Caco-2 (cell line): ENCODE measurements at regions of chr17 and their contacts with region 1.

Region 1: DNA sequence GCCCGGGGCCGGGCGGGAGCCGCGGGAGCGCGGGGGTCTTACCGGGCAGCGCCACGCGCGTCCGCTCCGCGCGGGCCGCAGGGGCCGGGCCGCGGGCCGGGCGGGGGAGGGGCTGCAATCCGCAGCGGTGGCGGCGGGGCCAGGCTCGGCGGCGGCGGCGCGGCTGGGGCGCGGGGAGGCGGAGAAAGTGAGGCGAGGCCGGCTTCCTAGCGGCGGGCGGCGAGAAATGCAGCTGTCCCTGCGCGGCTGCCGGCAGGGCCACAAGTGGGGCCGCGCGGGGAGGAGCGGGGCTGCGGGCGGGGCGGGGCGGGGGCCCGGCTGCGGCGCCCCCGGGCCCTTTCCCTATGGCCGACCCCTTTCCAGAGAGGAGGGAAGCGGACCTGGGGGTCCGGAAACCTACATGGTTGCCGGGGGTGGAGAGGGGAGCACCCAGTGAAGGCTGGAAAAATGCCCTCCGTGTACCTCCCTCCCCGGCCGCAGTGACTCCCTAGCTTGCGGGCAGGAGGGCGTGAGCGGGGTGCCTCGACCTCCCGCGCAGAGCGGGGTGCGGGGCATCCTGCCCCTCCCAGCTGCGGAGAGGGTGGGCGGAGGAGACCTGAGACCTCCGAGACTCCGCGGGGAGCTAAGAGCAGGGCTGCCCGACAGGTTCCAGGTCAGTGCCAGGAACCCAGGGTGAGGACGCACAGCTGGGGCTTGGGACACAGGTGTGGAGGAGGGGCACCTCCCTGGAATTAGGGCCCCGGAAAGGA is at the start of gene CUEDC1:
- DNase-seq: peak; percentile 76 to 90
- H3K4me3 ChIP-seq: peak within 1 kb of the TSS; percentile 69
- H3K4me3 Mint-ChIP-seq: peak within 1 kb of the TSS; percentile 72
- H3K27ac Mint-ChIP-seq: peak within 1 kb of the TSS; percentile 53
- H3K4me1 ChIP-seq: peaks cover 47% of the 10 kb centered on the region
- H3K4me1 Mint-ChIP-seq: peaks cover 36% of the 10 kb centered on the region
- H3K27me3 ChIP-seq: no peaks in the 10 kb centered on the region
- H3K27me3 Mint-ChIP-seq: no peaks in the 10 kb centered on the region
- CTCF ChIP-seq: peak; percentile 22 to 40
- total RNA-seq, gene CUEDC1: 27.5 TPM in 2 replicates

Region 2: GRCh38 chr17:57868007-57868909 is 87.1 kb before region 1 on chr17:
- CTCF ChIA-PET with region 1: no interaction called
- POLR2A ChIA-PET with region 1: no interaction called
- intact Hi-C with region 1: no loop called
- DNase-seq: no peak
- H3K4me3 ChIP-seq: no peak overlapping the region
- H3K4me3 Mint-ChIP-seq: no peak overlapping the region
- H3K27ac Mint-ChIP-seq: no peak overlapping the region
- H3K4me1 ChIP-seq: no peaks in the 10 kb centered on the region
- H3K4me1 Mint-ChIP-seq: peaks cover 6% of the 10 kb centered on the region
- H3K27me3 ChIP-seq: no peaks in the 10 kb centered on the region
- H3K27me3 Mint-ChIP-seq: no peaks in the 10 kb centered on the region
- CTCF ChIP-seq: no peak

Region 3: GRCh38 chr17:57902800-57903759 is 52.3 kb before region 1 on chr17:
- CTCF ChIA-PET with region 1: interaction called, 10 read pairs
- POLR2A ChIA-PET with region 1: interaction called, 5 read pairs
- intact Hi-C with region 1: loop called (anchors 2 kb)
- DNase-seq: peak; percentile 89 to 92
- H3K4me3 ChIP-seq: no peak overlapping the region
- H3K4me3 Mint-ChIP-seq: peak overlapping the region; percentile 49
- H3K27ac Mint-ChIP-seq: peak overlapping the region; percentile 87
- H3K4me1 ChIP-seq: peaks cover 74% of the 10 kb centered on the region
- H3K4me1 Mint-ChIP-seq: peaks cover 52% of the 10 kb centered on the region
- H3K27me3 ChIP-seq: no peaks in the 10 kb centered on the region
- H3K27me3 Mint-ChIP-seq: no peaks in the 10 kb centered on the region
- CTCF ChIP-seq: no peak

Region 4: DNA sequence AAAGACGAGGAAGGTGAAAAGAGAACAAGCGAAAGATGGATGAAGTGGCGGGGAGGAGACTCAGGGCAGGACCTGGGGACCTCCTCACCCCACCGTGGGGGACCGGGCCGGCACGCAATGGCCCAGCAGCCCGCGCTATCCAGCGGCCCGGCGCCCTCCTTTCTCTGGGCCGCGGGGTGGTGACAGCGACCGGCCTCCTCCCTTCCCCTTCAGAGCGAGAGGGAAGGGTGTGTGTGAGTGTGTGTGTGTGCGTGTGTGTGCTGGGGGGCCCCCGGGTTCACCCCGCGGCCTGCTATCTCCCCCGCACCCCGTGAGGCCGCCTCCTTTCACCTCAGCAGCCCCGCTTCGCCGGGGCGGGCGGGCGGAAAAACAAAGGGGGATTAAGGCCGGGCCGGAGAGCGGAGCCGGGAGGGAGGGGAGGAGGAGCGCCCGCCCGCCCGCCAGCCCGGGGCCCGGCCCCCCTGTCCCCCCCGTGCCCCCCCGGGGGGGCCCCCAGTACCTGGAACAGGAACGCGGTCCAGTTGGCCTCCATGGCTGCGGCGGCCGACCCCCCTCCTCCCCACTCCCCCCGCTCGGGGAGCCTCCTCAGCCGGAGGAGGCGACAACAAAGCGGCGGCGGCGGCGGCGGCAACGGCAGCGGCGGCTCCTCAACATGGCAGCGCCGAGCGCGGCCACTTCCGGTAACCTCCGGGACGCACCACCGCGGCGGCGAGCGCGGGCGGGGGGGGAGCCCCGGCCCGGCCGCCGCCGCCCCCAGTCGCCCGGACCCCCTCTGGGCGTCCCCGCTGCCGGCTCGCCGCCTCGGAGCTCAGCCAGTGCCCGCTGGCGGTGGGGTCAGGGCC is 32.4 kb after region 1 on chr17 and contains the start of gene VEZF1:
- CTCF ChIA-PET with region 1: interaction called, 4 read pairs
- POLR2A ChIA-PET with region 1: interaction called, 3 read pairs
- intact Hi-C with region 1: loop called (anchors 2 kb)
- DNase-seq: peak; percentile 86 to 88
- H3K4me3 ChIP-seq: peak within 1 kb of the TSS; percentile 83
- H3K4me3 Mint-ChIP-seq: peak within 1 kb of the TSS; percentile 97
- H3K27ac Mint-ChIP-seq: peak within 1 kb of the TSS; percentile 88
- H3K4me1 ChIP-seq: peaks cover 63% of the 10 kb centered on the region
- H3K4me1 Mint-ChIP-seq: peaks cover 47% of the 10 kb centered on the region
- H3K27me3 ChIP-seq: no peaks in the 10 kb centered on the region
- H3K27me3 Mint-ChIP-seq: no peaks in the 10 kb centered on the region
- CTCF ChIP-seq: no peak
- total RNA-seq, gene VEZF1: 52.1 and 54.9 TPM in 2 replicates

Region 5: DNA sequence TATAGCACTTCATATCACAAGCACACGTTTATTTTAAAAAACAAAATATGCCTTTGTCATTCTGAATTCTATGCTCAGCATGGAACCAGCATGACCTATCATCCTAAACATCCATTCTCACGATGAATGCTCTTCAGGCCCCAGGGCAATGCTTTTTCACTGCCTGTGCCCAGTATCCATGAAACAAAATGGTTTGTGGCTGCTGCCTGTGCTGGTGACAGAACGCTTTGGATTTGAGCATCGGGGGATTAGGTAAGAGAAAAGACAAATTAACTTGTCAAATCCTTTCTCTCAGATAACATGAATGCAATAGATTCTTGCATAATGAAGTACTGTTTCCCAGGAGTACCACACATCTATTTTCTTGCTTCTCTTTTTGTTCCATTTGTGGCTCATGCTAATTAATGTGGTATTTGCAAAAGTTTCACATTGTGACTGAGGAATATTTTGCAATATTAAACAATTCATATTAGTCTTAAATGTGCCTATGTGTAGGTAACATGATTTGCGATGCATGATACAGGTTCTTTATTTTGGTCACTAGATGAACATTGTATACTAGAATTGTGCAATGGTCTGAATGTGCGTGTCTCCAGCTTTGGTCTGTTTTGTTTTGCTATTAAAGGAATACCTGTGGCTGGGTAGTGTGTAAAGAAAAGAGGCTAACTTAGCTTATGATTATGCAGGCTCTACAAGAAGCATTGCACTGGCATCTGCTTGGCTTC is 77.5 kb after region 1 on chr17:
- CTCF ChIA-PET with region 1: no interaction called
- POLR2A ChIA-PET with region 1: no interaction called
- intact Hi-C with region 1: no loop called
- DNase-seq: no peak
- H3K4me3 ChIP-seq: no peak overlapping the region
- H3K4me3 Mint-ChIP-seq: no peak overlapping the region
- H3K27ac Mint-ChIP-seq: no peak overlapping the region
- H3K4me1 ChIP-seq: no peaks in the 10 kb centered on the region
- H3K4me1 Mint-ChIP-seq: no peaks in the 10 kb centered on the region
- H3K27me3 ChIP-seq: no peaks in the 10 kb centered on the region
- H3K27me3 Mint-ChIP-seq: no peaks in the 10 kb centered on the region
- CTCF ChIP-seq: no peak

Region 6: GRCh38 chr17:59627770-59628171 is 1672.4 kb after region 1 on chr17:
- CTCF ChIA-PET with region 1: no interaction called
- POLR2A ChIA-PET with region 1: interaction called, 16 read pairs
- intact Hi-C with region 1: no loop called
- DNase-seq: no peak
- H3K4me3 ChIP-seq: no peak overlapping the region
- H3K4me3 Mint-ChIP-seq: no peak overlapping the region
- H3K27ac Mint-ChIP-seq: peak overlapping the region; percentile 5
- H3K4me1 ChIP-seq: peaks cover 32% of the 10 kb centered on the region
- H3K4me1 Mint-ChIP-seq: peaks cover 18% of the 10 kb centered on the region
- H3K27me3 ChIP-seq: no peaks in the 10 kb centered on the region
- H3K27me3 Mint-ChIP-seq: no peaks in the 10 kb centered on the region
- CTCF ChIP-seq: no peak